ENCODE measurements at regions of chr7 and their contacts with region 1.

Region 1: DNA sequence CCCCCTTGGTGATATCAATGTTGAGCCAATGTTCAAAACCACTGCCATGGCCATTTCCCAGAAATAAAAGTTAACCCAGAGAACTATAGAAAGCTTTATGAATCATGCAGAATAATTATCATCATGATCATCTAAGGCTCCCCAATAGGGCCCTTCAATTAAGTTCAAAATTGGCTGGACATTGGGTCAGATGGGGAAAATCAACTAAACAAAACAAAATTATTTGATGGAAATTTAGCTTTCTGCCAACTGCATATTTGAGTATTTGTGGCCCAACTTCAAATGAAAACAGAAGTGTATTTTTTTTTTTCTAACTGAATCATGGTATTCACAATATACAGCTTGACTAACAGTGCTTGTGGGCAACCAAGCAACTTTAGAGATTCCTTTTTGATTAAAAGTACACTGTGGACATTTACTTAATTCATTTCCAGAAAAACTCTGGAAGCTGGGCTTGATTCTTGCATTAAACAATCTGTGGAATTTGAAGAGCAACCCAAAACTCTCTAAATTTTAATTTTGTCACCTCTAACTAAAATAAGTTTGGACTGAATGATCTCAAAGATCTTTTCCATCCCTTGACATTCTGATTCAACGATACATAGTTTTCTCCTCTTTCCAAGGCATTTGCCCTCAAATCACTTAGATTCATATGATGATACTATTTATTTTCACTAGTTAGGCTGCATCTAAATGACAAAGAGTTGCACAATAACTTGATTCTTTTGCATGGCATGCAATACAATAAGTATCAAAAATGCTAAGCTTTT is 203.2 kb downstream of the AHR start:
- DNase-seq: peak; percentile 19
- H3K4me3 ChIP-seq: no peak overlapping the region
- H3K27me3 ChIP-seq: no peaks in the 10 kb centered on the region
- CTCF ChIP-seq: no peak

Region 2: DNA sequence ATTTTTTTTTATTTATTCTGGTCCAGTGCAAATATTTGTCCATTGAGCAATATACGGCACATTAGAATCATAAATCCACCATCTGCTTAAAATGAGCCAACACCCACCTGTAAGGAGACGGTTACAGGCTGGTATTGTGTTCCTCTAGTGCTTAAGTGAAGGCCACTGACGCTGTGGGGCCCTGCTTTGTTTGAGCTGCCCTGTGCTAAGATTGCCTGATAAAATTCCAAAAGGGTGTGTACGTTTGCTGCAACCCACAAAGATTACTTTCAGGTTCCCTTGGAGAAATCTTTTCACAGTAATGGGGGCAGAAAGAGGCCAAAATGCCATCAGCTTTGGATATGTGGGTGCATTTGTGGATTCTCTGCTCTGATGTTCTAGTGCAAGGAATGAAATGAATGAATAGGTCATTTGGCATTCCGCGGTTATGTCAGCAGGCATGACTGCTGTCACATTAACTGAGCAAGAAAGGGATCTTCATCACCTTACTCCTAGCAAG is 654.2 kb before region 1 on chr7:
- CTCF ChIA-PET with region 1: no interaction called
- POLR2A ChIA-PET with region 1: no interaction called
- DNase-seq: no peak
- H3K4me3 ChIP-seq: no peak overlapping the region
- H3K27me3 ChIP-seq: no peaks in the 10 kb centered on the region
- CTCF ChIP-seq: no peak

Region 3: DNA sequence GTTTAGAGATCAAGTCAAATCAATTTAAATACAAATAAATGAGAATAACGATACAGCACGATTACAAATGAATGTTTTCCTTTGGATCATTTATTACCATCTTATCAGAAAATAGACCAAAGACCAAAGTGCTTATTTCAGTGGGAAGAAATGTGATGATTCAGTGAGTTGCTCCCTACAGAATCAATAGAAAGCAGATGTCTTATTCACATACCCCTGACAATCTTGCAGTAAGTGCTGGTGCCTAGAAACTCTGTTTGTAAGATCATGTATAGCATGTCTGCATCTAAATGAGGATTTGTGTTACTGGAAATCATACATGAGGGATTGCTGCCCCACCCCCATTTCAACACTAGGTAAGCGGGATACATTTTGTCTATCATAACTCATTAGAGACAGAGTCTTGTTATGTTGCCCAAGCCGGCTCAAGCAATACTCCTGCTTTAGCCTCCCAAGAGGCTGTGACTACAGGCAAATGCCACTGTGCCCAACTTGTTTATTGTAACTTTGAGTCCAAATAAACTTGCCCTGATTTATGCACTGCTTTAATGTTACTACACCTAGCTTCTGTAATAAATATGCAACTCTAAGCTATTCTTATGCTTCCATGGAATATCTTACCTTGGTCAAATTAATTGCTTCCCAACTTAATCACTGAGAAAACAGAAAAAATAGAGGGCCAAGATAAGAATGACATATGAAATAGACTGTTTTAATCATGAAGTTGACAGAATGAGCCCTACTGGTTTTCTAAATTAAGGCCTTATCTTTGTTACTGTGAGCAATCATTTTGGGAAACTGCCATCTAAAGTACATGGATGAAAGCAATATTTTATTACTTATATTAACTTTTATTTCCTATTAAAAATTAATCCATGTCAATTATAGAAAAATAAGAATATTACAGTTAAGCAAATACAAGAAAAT is 120.6 kb before region 1 on chr7:
- CTCF ChIA-PET with region 1: no interaction called
- POLR2A ChIA-PET with region 1: no interaction called
- DNase-seq: no peak
- H3K4me3 ChIP-seq: no peak overlapping the region
- H3K27me3 ChIP-seq: no peaks in the 10 kb centered on the region
- CTCF ChIP-seq: no peak

Region 4: DNA sequence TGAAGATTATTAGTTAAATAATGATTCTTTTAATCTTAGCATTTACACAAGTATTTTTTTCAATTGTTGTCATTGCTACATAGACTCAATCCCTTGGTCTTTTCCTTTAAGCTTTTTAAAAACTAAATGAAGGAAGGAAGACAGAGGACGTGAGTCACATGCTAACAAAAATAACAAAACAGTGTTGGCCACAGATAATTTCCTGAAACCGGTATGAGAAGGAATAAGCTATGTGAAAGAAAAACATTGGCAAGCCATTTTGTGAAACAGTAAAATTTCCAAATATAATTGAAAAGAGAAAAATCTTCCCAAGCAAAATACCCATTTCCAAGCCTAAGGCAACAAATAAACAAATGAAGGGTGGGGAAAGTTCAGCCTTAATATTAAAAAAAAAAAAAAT is 19.8 kb after region 1 on chr7:
- CTCF ChIA-PET with region 1: no interaction called
- POLR2A ChIA-PET with region 1: interaction called, 10 read pairs
- DNase-seq: peak; percentile 54
- H3K4me3 ChIP-seq: no peak overlapping the region
- H3K27me3 ChIP-seq: no peaks in the 10 kb centered on the region
- CTCF ChIP-seq: no peak

Measured in BJ (cell line).